ENCODE measurements at regions of chr22 and their contacts with region 1.

Region 1: DNA sequence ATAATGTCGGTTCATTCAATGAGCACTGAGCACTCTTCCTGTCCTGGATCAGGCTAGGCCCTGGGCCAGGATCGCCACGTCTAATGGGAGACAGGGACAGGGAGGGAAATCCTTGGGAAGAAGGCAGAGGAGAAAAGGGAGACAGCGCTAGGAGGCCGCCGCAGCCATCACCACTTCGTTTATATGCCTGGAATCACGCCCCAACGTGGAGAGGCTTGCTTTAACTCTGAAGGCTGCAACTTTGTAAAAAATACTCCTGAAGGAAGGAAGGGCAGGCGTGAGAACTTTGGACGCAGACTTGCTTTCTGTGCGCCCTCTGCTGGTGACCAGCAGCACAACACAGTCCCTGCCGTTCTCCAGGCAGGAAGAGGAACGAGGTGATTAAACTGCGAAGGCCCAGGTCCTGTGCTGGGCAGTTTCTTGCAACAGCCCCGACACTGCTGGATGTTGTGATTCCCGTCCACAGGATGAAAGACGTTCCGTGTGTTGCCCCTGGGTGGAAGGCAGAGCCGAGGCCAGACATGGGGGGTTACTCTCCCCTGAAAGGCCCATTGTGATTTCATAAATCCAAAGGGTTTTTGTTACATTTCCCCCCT is 22.1 kb downstream of the RIBC2 start:
- DNase-seq: peak; percentile 95

Region 2: GRCh38 chr22:45268958-45269844 is 166.4 kb before region 1 on chr22:
- intact Hi-C with region 1: loop called (anchors 2 to 10 kb)
- DNase-seq: peak; percentile 96